Cardiac septum (tissue), 1 donor: ENCODE measurements at regions of chr13 and their contacts with region 1.

Region 1: DNA sequence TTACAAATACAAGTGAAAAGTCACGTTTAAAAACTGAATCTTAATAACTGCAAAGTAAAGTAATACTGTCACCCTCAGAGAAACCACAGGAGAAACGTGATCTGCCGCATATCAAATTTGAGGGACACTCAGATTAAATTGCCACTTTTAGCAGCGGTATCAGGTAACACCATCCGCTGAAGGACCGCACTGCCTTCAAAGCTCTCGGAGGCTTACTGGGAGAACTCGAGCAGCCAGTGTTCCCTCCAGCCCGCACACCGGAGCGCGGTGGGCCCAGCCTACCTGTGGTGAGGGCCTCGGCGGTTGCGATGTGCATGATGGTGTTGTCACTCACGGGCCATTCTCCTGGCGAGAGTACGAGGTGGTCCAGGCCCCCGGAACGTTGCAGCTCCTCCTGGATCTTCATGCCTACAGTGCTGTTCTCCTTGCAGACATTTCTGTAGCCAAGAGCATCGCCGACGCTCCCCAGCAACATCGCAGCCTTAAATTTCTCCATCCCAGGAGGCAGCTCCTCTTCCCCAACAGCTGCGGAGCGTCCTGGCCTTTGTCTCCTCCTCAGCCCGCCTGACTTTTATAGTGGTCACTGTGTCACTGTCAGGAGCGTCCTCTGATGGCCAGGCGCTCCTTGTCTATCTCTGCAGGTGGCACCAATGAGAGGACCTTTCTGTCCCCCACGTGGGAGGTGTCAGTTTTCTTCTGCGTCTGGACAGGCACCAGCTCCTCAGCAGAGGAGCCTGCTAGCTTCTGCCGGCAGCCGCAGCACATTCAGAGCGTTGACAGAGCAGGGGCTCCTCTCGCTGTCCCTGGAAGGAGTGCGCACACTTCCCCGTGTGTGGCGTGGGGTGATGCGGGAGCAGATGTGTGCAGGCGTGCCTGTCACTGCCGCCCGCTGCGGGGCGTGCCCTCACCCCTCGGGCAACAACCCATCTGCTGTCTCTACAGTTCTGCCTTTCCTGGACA is at the start of gene ADPRHL1:
- DNase-seq: peak; percentile 87
- total RNA-seq, gene ADPRHL1: 480 TPM

Region 2: DNA sequence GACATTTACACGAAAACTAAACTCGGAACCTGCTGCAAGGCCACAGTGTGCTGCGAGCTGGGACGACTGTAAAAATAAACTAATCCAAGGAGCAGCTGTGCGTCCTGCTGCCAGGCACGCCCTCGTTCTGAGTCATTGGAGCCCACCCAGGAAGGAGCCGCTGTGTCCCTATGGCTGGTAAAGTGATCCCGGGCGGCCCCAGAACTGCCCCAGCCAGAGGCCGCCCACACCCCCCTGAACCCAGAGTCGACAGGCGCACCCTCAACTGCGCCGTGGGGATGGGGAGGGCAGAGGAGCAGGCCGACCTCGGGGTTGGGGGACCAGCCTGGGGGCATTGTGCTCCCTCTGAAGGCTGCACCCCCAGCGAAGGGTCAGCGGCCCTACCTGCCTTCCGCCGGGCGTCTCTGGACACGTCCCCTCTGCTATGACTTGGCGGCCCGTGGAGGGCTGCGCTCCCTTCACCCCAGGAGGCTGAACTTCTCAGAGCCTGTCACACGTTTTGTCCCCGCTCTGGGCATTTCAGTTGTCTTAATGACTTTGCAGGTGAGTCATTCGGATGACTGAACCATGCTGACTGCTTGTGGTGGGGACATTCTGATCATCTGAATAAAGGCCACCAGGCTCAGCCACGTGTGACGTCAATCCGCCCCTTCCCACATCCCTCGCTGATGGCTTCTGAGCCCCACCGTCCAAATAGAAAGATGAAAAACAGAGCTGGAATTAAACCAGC is 42.6 kb before region 1 on chr13:
- intact Hi-C with region 1: loop called (anchors 5 kb)
- DNase-seq: peak; percentile 61

Region 3: DNA sequence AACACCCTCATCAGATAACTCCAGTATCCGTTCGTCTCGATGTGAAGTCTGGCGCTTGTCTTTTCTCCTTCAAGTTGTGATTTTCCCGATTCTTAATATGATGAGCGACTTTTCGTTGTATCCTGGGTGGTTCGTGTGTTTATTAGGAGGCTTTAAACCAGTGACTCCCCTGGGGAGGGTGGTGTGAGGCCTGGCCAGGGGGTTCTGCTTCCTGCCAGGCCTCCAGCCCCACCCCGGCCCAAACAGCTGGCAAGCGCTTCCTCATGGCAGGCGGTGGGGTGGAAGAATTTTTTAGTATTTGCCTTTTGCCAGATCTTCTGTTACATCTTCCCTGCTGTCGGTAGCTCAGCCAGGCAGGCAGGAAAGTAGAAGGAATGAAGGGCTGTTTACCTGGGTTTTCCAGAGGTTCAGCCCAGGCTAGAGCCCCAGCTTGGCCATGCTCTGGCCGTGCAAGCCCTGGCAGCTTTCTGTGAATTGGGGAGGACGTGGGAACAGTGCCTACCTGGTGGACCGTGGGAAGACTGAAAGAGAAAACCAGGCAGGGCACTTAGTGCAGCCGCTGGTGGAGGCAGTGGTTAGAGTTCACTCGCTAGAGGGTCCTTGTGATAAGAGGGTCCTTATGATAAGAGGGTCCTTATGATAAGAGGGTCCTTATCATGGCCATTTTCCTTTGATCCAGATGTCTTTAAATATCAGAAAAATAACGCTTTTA is 75.0 kb after region 1 on chr13:
- intact Hi-C with region 1: no loop called
- DNase-seq: no peak

Region 4: DNA sequence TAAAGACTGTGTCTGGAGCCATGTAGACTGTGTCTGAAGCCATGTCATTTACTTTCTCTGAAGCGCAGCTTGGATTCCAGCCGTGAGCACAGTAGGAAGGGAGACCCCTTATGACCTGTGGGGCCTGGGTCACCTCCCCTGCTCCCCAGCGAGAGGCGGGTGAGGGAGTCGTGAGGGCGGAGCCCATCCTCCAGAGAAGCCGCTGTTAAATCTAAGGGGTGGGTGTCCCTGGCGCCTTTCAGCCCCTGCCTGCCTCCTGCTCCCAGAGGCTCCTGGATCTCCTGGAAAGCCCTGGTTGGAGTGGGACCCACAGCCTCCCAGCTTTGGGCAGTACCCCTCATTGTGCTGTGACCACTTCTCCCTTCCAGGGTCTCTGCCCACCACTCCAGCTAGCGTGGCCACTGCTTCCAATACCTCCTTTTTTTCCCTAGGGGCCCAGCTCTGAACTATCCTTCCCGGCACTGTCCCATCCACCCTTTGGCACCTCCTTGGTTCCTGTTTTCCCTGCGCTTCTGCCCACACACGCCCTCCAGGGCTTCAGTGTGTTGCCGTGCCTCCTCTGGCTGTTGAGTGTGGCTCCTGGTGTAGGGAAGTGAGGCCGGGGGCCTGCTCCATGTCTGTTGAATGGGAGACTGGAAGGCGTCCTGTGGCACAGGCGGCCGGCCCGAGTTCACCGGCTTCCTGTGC is 175.2 kb after region 1 on chr13:
- intact Hi-C with region 1: no loop called
- DNase-seq: no peak

Region 5: DNA sequence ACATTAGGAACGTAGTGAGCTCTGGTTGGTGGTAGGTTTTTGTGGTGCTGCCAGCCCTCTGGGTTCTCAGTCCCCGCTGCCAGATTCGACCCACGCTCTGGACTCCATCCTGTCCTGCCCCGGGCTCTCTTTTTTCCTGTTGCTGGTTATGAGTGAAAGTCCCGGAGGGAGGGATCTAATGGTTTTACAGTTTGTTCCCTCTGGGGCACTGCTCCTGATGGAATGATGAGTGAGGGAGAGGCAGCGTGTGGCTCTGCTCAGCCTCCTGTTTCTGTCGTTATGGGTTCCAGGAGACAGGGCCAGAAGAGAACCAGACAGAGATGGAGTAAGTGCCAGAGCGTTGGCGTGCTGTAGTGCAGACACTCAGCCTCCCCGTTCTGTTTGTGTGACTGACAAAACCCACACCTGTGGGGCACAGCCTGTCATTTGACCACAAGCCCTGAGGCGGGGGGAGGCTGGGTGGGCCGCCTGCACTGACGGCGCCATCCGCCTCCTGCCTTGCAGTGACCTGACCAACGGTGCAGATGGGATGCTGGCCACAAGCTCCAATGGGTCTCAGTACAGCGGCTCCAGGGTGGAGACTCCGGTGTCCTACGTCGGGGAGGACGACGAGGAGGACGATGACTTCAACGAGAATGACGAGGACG is 186.5 kb after region 1 on chr13:
- intact Hi-C with region 1: no loop called
- DNase-seq: peak; percentile 81